ENCODE measurements at regions of chr9 and their contacts with region 1.

Region 1: GRCh38 chr9:71145179-71145578 is 23.8 kb upstream of the TRPM3 start:
- DNase-seq: no peak
- ATAC-seq: no peak
- H3K4me3 ChIP-seq: no peak overlapping the region
- H3K27ac ChIP-seq: no peak overlapping the region
- H3K4me1 ChIP-seq: no peaks in the 10 kb centered on the region
- H3K27me3 ChIP-seq: no peaks in the 10 kb centered on the region
- CTCF ChIP-seq: no peak
- POLR2A ChIP-seq: no peak

Region 2: GRCh38 chr9:70954126-70954525 is 191.1 kb before region 1 on chr9:
- in situ Hi-C with region 1: no loop called
- intact Hi-C with region 1: no loop called
- DNase-seq: no peak
- ATAC-seq: no peak
- H3K4me3 ChIP-seq: no peak overlapping the region
- H3K27ac ChIP-seq: no peak overlapping the region
- H3K4me1 ChIP-seq: no peaks in the 10 kb centered on the region
- H3K27me3 ChIP-seq: no peaks in the 10 kb centered on the region
- CTCF ChIP-seq: no peak
- POLR2A ChIP-seq: no peak

Region 3: DNA sequence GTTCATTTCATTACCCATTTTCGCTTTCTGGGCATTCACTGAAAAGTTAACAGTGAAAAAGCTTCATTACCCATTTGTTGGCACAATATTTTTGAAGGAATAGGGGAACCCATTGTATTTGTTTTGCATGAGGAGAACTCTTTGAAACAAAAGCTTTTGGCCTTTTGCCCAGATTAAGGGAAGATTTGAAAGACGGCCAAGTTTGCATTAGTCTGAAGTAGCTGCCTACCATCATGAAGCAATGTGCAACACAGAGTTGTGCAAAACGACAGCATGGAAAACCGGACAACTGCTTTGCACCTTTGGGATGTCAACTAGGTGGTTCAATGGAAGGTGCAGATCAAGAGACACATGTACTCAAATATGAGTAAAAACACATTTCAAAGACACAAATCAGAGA is 108.7 kb before region 1 on chr9:
- in situ Hi-C with region 1: loop called in 1 of 4 experiments (anchors 25 kb)
- intact Hi-C with region 1: no loop called
- DNase-seq: no peak
- ATAC-seq: no peak
- H3K4me3 ChIP-seq: no peak overlapping the region
- H3K27ac ChIP-seq: no peak overlapping the region
- H3K4me1 ChIP-seq: no peaks in the 10 kb centered on the region
- H3K27me3 ChIP-seq: no peaks in the 10 kb centered on the region
- CTCF ChIP-seq: no peak
- POLR2A ChIP-seq: no peak